GM23248 (cell line): ENCODE measurements at regions of chr16 and their contacts with region 1.

Region 1: DNA sequence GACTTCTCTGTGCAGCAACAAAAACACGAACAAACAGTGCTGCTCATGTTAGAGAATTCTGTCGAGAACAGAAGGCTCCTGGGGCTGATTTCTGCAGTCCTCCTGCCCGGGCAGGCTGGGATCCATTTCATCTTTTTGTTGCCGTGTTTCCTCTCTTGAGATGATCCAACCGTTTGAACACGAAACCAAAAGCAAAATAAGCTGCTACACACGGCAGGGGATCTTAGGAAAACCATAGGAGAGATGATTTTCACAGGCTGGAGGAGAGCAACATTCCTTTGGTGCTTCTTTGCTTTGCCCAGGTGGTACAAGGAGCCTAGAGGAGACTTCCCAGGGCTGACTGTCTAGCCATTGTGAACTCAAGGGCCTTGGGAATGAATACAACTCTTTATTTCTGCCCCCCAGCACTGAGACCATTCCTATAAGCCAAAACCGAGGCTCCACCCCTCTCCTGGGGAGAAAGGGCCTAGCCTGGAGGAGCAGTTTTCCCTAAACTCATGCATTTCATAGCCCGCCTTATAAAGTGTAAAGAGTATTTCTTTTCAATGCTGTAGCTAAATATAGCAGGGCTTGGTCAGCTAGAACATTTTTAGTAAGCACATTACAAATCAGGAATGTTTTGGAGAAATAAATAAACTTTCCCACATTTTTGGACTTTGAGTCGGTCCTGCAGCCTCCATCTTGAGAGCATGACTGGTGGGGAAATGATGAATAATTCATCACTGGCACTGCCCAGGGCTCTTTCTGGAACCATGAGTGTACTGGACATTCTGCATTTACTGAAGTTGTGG is 7.7 kb downstream of the FOXL1 start:
- DNase-seq: peak; percentile 94
- H3K4me3 ChIP-seq: peak overlapping the region; percentile 36
- H3K27ac ChIP-seq: peak overlapping the region; percentile 97
- H3K4me1 ChIP-seq: peaks cover 70% of the 10 kb centered on the region
- H3K27me3 ChIP-seq: no peaks in the 10 kb centered on the region

Region 2: DNA sequence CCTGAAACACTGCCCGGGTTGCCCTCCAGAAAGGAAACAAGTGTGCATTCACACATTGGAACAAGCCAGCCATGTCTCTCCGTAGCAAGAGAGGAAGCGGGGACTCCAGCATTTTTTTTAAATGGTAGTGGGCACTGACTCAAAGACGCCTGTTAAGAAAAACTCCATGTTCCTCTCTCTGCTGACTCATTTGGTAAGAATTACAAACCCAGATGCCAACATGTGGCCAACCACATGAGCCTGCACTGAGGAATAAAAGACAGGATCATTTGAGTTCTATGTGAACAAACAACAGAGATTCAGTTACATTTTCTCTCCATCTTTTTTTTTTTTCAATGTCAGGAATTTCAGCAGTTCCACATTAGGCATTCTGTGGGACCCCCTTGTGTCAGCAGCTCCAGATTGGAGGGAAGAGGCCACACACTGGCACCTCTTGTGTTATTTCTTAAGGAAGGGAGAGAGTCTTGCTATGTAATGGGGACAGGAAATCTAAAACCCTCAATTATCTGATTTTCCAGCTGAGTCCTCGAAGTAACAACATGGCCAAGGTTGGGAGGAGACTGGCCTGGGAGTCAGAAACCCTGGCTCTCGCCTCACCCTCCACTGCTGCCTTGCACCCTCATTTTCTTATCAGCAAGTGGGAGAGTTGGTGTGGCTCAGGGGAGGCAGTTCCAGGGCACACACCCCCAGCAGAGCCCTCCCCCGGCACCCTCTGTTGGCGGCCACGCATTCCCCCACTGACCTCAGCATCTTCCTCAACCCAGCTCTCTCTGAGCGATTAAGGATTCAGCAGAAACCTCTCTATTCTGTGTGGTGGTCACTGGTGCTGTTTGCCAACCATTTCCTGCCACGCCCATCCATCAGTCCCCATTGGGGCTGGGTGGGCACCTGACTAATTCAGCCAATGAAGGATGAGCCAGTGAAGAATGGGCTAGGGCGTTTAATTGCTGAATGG is 165.3 kb after region 1 on chr16:
- in situ Hi-C with region 1: loop called (anchors 10 kb)
- DNase-seq: peak; percentile 87
- H3K4me3 ChIP-seq: no peak overlapping the region
- H3K27ac ChIP-seq: peak overlapping the region; percentile 52
- H3K4me1 ChIP-seq: peaks cover 13% of the 10 kb centered on the region
- H3K27me3 ChIP-seq: no peaks in the 10 kb centered on the region